Aorta (tissue), 5 donors: ENCODE measurements at regions of chr4 and their contacts with region 1.

Region 1: DNA sequence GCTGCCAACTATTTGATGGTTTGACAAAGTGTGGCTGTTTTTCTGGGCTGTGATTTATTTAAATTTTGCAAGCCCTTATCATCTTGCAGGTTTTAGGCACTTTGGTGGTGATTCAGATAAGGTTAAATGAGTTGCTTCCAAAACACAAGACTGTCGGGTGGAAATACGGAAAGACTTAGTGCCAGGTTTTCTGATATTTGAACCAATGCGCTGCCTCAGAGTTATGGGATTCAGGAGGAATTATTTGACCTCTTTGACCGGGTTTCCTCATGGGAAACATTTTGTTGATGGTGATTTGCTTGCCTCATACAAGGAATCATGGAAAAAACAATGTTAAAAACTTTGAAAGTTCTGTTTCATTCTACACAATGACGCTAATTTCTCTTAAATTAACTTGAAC is 136.1 kb upstream of the MAP9 start:
- DNase-seq: no peak
- ATAC-seq: peak; percentile 68
- H3K4me3 ChIP-seq: no peak overlapping the region
- H3K27ac ChIP-seq: no peak overlapping the region
- H3K4me1 ChIP-seq: peaks cover 0 to 7% of the 10 kb centered on the region in 2 donors
- H3K27me3 ChIP-seq: no peaks in the 10 kb centered on the region

Region 2: DNA sequence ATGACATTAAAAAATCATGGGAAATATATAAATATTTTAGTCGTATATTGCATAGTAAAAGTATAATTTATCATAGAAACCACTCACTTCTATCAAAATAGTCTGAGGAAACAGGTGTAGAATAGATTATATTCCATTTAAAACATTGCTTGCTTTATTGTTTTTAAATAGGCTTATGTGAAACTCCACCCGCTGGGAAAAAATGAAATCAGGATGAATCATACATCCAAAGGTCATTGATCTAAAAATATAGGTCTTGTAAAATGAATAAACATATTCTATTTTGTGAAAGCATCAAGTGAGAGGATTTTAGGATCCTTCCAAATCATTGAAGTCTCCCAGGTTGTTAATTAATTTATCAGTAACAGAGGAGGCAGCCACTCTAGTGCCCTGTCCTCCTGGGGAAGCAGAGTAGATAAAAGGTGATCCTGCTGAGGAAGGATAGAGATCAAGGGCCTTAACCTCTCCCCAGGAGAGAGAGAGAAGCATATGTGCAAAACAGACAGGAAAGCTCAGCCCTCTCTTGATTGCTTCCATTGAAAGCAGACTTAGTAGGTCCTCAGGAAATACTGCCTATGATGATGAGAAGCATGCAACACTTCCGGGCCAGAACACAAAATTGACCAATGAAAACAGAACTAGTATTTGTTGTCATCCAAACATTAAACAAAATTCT is 39.3 kb before region 1 on chr4:
- intact Hi-C with region 1: loop called in 1 of 2 experiments (anchors 5 kb)
- DNase-seq: no peak
- ATAC-seq: no peak
- H3K4me3 ChIP-seq: no peak overlapping the region
- H3K27ac ChIP-seq: no peak overlapping the region
- H3K4me1 ChIP-seq: peaks cover 0 to 4% of the 10 kb centered on the region in 2 donors
- H3K27me3 ChIP-seq: no peaks in the 10 kb centered on the region

Region 3: GRCh38 chr4:155777971-155778735 is 265.3 kb after region 1 on chr4:
- intact Hi-C with region 1: loop called in 1 of 2 experiments (anchors 10 kb)
- DNase-seq: no peak
- ATAC-seq: peak; percentile 77
- H3K4me3 ChIP-seq: no peak overlapping the region
- H3K27ac ChIP-seq: peak overlapping the region in 1 of 2 donors; percentile 43
- H3K4me1 ChIP-seq: peaks cover 1 to 4% of the 10 kb centered on the region in 2 donors
- H3K27me3 ChIP-seq: no peaks in the 10 kb centered on the region